ENCODE measurements at regions of chr7 and their contacts with region 1.

Region 1: GRCh38 chr7:100556541-100556940 is 17.2 kb downstream of the SAP25 start:
- DNase-seq: no peak
- H3K4me3 ChIP-seq: no peak overlapping the region
- H3K27ac ChIP-seq: no peak overlapping the region
- H3K4me1 ChIP-seq: no peaks in the 10 kb centered on the region; a peak in 1 of 4 replicates
- H3K27me3 ChIP-seq: no peaks in the 10 kb centered on the region
- CTCF ChIP-seq: no peak
- EP300 ChIP-seq: no peak
- RAD21 ChIP-seq: no peak

Region 2: DNA sequence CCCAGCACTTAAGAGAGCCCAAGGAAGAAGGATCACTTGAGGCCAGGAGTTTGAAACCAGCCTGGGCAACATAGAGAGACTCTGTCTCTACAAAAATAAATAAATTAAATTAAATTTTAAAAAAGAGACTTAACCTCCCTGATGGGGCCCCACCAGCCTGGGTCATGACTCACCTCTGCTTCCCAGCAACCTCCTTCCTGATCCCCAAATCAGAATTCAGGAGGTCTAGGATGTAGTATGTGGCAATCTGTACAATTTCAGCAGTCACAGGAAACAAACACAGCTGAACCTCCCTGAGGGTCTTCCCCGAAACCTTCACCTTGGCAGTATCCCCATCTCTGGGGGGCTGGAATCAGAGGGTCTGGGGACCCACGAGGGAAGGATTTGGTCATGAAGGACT is 110.5 kb before region 1 on chr7:
- CTCF ChIA-PET with region 1: interaction called, 16 read pairs
- POLR2A ChIA-PET with region 1: no interaction called
- DNase-seq: no peak
- H3K4me3 ChIP-seq: no peak overlapping the region
- H3K27ac ChIP-seq: peak overlapping the region in 1 of 2 experiments; percentile 36; a peak in 2 of 4 replicates
- H3K4me1 ChIP-seq: peaks cover 2 to 4% of the 10 kb centered on the region in 2 experiments; a peak in 2 of 4 replicates
- H3K27me3 ChIP-seq: no peaks in the 10 kb centered on the region
- CTCF ChIP-seq: no peak
- EP300 ChIP-seq: no peak
- RAD21 ChIP-seq: no peak

Region 3: DNA sequence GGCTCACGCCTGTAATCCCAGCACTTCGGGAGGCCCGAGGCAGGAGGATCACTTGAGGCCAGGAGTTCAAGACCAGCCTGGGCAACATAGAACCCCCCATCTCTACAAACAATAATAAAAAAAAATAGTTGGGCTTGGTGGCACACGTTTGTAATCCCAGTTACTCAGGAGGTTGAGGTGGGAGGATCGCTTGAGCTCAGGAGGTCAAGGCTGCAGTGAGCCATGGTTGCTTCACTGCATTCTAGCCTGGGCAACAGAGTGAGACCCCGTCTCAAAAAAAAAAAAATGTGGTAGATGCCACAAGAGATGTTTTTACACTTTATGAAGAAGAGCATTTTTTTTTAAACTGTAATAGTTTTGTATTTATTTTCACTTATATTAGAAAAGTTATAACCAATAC is 60.0 kb before region 1 on chr7:
- CTCF ChIA-PET with region 1: interaction called, 151 read pairs
- POLR2A ChIA-PET with region 1: no interaction called
- DNase-seq: no peak
- H3K4me3 ChIP-seq: no peak overlapping the region
- H3K27ac ChIP-seq: no peak overlapping the region
- H3K4me1 ChIP-seq: no peaks in the 10 kb centered on the region
- H3K27me3 ChIP-seq: no peaks in the 10 kb centered on the region
- CTCF ChIP-seq: no peak
- EP300 ChIP-seq: no peak
- RAD21 ChIP-seq: no peak

Region 4: DNA sequence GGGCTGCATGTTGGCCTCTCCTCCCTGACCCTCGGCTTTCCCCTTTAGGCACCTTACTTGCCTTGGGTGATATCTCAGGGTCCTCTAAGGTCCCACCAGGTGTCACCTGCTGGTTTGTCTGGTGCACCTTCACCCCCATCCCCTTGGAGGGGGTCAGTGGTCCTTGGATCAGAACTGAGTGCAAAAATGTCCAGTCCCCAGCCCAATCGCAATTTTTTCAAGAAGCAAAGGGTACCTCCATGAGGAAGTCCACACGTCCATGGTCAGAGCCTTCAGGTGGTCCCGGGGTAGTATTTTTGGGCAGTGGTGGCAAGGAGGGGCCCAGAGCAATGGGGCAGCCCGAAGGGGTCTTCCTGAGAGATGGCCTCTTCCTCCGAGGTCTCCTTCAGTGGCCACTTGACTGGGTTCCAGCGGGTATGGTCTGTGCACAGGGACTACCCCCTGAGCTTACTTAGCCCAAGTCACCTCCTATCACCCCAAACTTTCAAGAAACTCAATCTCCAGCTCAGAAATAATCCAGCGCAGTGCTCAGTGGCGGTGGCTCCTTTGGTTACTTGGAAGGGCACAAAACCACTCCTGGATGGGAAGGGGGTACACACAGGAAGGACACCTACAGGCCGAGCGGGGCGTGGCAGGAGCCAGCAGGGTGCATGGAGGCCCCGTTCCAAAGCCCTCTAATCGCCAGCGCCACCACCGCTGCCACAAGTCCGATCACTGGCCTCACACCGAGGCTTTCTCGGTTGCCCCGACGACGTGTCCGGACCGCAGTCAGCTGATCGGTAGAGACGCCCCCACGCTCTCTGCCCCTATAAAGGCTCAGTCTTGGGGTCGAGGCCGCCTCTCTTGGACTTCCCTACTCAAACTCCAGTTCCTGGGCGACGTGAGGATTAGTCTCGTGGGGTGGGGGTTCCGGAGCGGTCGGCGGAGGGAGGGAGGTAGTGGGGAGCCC is 12.6 kb after region 1 on chr7:
- CTCF ChIA-PET with region 1: interaction called, 73 read pairs
- POLR2A ChIA-PET with region 1: no interaction called
- DNase-seq: peak; percentile 79
- H3K4me3 ChIP-seq: no peak overlapping the region
- H3K27ac ChIP-seq: no peak overlapping the region
- H3K4me1 ChIP-seq: peaks cover 0 to 42% of the 10 kb centered on the region in 2 experiments; a peak in 1 of 4 replicates
- H3K27me3 ChIP-seq: no peaks in the 10 kb centered on the region
- CTCF ChIP-seq: peak; percentile 51
- EP300 ChIP-seq: no peak
- RAD21 ChIP-seq: no peak

Region 5: DNA sequence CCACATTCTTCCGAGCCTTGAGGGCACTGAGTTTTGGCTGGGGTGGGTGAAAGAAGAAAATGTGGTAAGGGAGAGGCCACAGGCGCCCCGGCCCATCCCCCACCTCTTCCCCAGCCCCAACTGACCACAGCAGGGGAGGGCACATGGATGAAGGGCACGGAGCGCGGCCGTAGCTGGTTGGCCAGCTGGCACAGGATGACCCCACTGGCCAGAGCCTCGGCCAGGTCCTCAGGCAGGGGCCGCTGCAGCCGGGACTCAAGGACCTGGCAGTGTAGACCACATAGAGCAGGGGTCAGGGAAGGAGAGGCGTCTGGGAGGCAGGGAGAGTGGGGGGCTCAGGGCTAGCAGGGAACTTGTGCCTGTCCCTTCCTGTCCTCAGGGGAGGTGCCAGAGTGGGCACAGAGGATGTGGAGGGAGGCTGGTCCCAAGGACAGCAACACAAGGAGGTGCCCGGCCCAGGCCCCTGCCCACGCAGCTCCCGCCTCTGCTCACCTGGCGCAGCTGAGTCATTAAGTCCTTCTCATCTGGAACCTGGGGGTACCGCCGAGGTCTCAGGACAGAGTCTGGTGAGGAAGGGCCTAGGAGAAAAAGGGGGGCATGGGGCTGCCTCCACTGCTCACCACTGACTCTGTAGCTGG is 19.3 kb after region 1 on chr7:
- CTCF ChIA-PET with region 1: interaction called, 16 read pairs
- POLR2A ChIA-PET with region 1: no interaction called
- DNase-seq: peak; percentile 24
- H3K4me3 ChIP-seq: no peak overlapping the region
- H3K27ac ChIP-seq: no peak overlapping the region
- H3K4me1 ChIP-seq: peaks cover 0 to 4% of the 10 kb centered on the region in 2 experiments; a peak in 1 of 4 replicates
- H3K27me3 ChIP-seq: no peaks in the 10 kb centered on the region
- CTCF ChIP-seq: no peak
- EP300 ChIP-seq: no peak
- RAD21 ChIP-seq: no peak

Region 6: DNA sequence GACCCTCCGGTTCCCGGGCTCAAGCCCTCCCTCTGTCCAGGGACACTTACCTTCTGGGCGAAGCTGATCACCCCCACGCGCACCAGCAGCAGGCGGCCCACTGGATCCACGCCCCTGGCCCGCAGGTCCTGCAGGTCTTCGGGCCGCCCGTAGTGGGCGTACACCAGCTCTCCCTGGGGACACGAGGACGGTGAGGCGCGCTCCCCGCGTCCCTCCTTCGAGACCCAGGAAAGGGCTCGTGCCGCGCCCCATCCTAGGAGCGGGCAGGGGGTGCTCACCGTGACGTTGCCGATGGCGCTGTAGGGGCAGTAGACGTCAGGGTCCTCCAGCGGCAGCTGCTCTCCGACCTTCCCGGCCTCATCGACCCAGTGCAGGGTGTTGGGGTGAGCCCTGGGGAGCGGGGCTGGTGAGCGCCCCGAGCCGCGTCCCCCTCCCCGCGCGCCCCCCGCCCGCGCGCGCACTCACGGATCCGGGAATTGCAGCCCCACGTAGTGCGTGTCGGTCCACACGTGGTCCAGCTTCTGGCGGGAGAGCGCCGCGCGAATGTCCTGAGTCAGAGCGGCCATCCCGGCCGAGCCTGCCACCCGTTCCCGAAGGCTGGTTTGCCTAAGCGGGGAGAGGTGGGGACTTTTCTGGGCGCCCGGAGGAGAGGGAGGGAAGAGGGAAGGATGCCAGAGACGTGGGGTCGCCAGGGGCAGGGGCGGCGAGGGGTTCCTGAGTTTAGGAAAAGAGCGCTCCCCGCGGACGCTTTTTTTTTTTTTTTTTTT is 76.6 kb after region 1 on chr7:
- CTCF ChIA-PET with region 1: interaction called, 12 read pairs
- POLR2A ChIA-PET with region 1: no interaction called
- DNase-seq: peak; percentile 95
- H3K4me3 ChIP-seq: peak overlapping the region; percentile 43 to 59
- H3K27ac ChIP-seq: no peak overlapping the region
- H3K4me1 ChIP-seq: peaks cover 6% of the 10 kb centered on the region in 2 experiments; a peak in 1 of 4 replicates
- H3K27me3 ChIP-seq: no peaks in the 10 kb centered on the region
- CTCF ChIP-seq: peak; percentile 53
- EP300 ChIP-seq: no peak
- RAD21 ChIP-seq: peak; percentile 46

Region 7: DNA sequence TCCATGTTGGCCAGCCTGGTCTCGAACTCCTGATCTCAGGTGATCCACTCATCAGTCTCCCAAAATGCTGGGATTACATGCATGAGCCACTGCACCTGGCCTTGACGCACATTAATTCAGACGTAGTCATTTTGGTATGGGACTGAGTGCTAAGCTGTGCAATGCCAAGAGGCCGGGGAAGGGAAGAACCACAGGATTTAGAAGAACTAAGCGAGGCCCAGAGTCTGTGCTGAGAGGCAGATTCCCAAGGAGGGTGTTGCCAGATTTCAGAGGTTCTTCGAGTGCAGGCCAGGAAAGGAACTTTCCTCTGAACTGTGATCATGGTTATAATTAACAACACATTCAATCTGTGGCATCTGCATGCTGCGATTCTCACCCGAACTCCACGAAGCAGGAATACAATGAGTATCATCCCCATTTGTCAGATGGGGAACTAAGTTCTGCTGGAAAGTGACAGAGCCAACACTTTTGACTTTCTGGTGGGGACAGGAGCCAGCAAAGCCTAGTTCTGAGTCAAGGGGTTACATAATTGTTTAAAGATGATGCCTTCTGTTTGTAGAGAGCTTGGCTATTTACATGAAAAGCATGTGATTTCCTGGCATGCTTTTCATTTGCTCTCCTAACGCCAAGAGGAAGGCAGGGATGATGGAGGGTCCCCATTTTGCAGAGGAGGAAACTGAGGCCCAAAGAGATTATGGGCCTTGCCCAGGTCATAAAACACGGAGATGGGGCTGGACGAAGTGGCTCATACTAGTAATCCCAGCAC is 170.6 kb after region 1 on chr7:
- CTCF ChIA-PET with region 1: interaction called, 14 read pairs
- POLR2A ChIA-PET with region 1: no interaction called
- DNase-seq: no peak
- H3K4me3 ChIP-seq: no peak overlapping the region
- H3K27ac ChIP-seq: no peak overlapping the region
- H3K4me1 ChIP-seq: no peaks in the 10 kb centered on the region; a peak in 1 of 4 replicates
- H3K27me3 ChIP-seq: peaks cover 4% of the 10 kb centered on the region; the same call in 1 of the 2 replicates
- CTCF ChIP-seq: no peak
- EP300 ChIP-seq: no peak
- RAD21 ChIP-seq: no peak

Region 8: GRCh38 chr7:101265622-101266516 is 709.3 kb after region 1 on chr7:
- CTCF ChIA-PET with region 1: no interaction called
- POLR2A ChIA-PET with region 1: no interaction called
- DNase-seq: no peak
- H3K4me3 ChIP-seq: no peak overlapping the region
- H3K27ac ChIP-seq: no peak overlapping the region
- H3K4me1 ChIP-seq: no peaks in the 10 kb centered on the region
- H3K27me3 ChIP-seq: no peaks in the 10 kb centered on the region
- CTCF ChIP-seq: no peak
- EP300 ChIP-seq: no peak
- RAD21 ChIP-seq: no peak

Measured in SK-N-SH (cell line).